ENCODE measurements at regions of chr1 and their contacts with region 1.

Region 1: GRCh38 chr1:14924455-14925331 is 228.9 kb upstream of the TMEM51 start:
- DNase-seq: peak; percentile 39
- H3K4me3 Mint-ChIP-seq: peak overlapping the region; percentile 45
- H3K27ac Mint-ChIP-seq: no peak overlapping the region
- H3K4me1 Mint-ChIP-seq: peaks cover 2% of the 10 kb centered on the region
- H3K27me3 Mint-ChIP-seq: peaks cover 34% of the 10 kb centered on the region

Region 2: GRCh38 chr1:14945132-14946016 is 20.7 kb after region 1 on chr1:
- CTCF ChIA-PET with region 1: no interaction called
- intact Hi-C with region 1: no loop called
- DNase-seq: no peak
- H3K4me3 Mint-ChIP-seq: no peak overlapping the region
- H3K27ac Mint-ChIP-seq: no peak overlapping the region
- H3K4me1 Mint-ChIP-seq: no peaks in the 10 kb centered on the region
- H3K27me3 Mint-ChIP-seq: peaks cover 2% of the 10 kb centered on the region

Region 3: GRCh38 chr1:14968251-14968851 is 43.7 kb after region 1 on chr1:
- CTCF ChIA-PET with region 1: no interaction called
- intact Hi-C with region 1: loop called (anchors 5 kb)
- DNase-seq: no peak
- H3K4me3 Mint-ChIP-seq: no peak overlapping the region
- H3K27ac Mint-ChIP-seq: no peak overlapping the region
- H3K4me1 Mint-ChIP-seq: peaks cover 17% of the 10 kb centered on the region
- H3K27me3 Mint-ChIP-seq: no peaks in the 10 kb centered on the region

Region 4: GRCh38 chr1:15152318-15153183 is 227.9 kb after region 1 on chr1:
- CTCF ChIA-PET with region 1: no interaction called
- intact Hi-C with region 1: no loop called
- DNase-seq: peak; percentile 74
- H3K4me3 Mint-ChIP-seq: peak overlapping the region; percentile 51
- H3K27ac Mint-ChIP-seq: no peak overlapping the region
- H3K4me1 Mint-ChIP-seq: peaks cover 30% of the 10 kb centered on the region
- H3K27me3 Mint-ChIP-seq: peaks cover 46% of the 10 kb centered on the region